Calu3 (cell line): ENCODE measurements at regions of chr15 and their contacts with region 1.

Region 1: DNA sequence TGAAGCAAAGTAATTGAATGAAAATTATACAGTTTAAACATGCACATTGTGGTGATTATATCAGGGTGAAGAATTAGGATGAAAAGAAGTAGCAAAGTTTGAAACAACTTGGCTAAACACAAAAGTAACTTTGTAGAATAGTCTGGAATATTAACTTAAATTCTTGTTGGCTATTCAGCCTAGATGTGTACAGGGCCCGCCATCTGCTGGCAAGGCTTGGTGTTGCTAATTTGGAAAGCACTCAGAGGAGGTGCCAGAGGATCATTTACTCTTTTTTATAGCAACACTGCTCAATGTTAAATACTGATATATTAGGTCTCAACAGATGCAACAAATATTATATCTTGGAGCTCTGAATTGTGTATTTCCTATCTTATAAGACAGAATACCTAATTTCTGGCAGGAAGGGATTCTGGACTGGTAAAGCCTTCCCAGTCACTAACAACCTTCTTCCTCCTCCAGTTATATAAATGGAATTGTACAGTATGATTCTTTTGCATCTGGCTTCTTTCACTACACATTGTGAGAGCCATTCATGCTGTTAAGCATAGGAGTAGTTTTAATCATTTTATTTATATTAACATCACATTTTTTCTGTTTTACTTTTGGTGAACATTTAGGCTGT is 36.1 kb downstream of the TTC23 start:
- DNase-seq: peak; percentile 79
- H3K4me3 Mint-ChIP-seq: no peak overlapping the region
- H3K27ac Mint-ChIP-seq: no peak overlapping the region
- H3K4me1 Mint-ChIP-seq: no peaks in the 10 kb centered on the region
- H3K27me3 Mint-ChIP-seq: no peaks in the 10 kb centered on the region
- CTCF ChIP-seq: peak; percentile 73

Region 2: DNA sequence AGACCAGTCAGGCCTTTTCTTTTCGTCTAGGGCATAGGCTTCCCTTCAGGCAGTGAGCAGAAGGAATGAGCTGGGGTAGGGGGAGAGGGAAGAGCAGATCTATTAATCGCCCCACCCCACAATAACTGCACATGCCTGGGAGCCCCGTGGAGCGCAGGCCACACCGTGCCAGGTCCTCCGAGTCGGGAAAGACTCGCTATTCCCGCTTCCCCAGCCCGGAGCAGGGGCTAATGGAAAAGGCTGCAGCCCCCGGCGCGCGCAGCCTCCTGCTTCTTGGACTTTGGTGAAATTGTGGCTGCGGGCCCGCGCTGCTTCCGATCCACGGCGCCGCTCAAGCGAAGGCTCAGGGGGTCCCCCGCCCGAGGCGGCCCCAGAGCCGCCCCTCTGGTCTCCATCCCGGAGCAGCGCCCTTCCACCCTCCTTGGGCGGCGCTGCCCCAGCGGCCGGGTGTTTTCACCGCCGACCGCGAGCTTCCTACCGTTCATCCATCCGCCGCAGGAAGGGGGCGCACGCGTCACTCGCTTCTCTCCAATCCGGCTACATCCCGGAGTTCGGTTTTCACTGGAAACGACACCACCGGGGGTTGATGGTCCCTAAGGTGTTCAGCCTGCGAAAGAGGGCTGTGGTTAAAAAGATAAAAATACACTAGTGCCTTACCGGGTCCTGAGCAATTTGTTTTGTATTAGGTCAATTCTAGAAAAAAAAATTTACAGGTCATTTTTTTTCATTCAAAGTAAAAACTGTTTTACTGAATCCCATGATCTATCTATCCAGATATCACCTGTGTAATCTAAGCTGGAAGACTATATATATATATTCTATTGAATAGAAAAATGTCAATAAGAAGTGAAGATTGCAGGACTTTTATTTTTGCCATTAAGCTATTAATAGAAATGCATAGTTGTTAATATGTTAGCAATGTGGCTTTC is 112.8 kb before region 1 on chr15:
- CTCF ChIA-PET with region 1: interaction called, 13 read pairs
- intact Hi-C with region 1: loop called (anchors 1 kb)
- DNase-seq: peak; percentile 93
- H3K4me3 Mint-ChIP-seq: peak overlapping the region; percentile 63
- H3K27ac Mint-ChIP-seq: no peak overlapping the region
- H3K4me1 Mint-ChIP-seq: peaks cover 8% of the 10 kb centered on the region
- H3K27me3 Mint-ChIP-seq: peaks cover 76% of the 10 kb centered on the region
- CTCF ChIP-seq: peak; percentile 89

Region 3: GRCh38 chr15:99123706-99124451 is 89.4 kb before region 1 on chr15:
- CTCF ChIA-PET with region 1: interaction called, 3 read pairs
- intact Hi-C with region 1: loop called (anchors 5 kb)
- DNase-seq: peak; percentile 83
- H3K4me3 Mint-ChIP-seq: peak overlapping the region; percentile 76
- H3K27ac Mint-ChIP-seq: peak overlapping the region; percentile 93
- H3K4me1 Mint-ChIP-seq: peaks cover 18% of the 10 kb centered on the region
- H3K27me3 Mint-ChIP-seq: no peaks in the 10 kb centered on the region
- CTCF ChIP-seq: no peak

Region 4: DNA sequence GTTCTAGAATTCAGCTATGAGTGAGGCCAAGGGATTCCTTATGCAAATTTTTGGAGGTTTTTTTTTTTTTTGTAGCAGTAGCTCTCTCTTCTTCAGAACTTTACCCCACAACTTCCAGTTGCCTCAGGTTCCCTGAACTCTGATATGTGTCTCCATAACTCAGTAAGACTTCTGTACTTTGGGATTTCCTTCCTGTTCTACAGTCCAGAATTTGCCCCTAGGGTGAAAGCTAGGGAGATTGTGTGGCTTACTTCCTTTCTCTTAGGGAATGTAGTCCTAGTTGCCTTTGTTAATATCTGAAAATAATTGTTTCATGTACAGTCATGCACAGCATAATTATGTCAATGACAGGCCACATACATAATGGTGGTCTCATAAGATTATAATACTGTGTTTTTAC is 68.8 kb after region 1 on chr15:
- CTCF ChIA-PET with region 1: no interaction called
- intact Hi-C with region 1: no loop called
- DNase-seq: no peak
- H3K4me3 Mint-ChIP-seq: no peak overlapping the region
- H3K27ac Mint-ChIP-seq: no peak overlapping the region
- H3K4me1 Mint-ChIP-seq: no peaks in the 10 kb centered on the region
- H3K27me3 Mint-ChIP-seq: no peaks in the 10 kb centered on the region
- CTCF ChIP-seq: no peak

Region 5: GRCh38 chr15:99454941-99455788 is 241.9 kb after region 1 on chr15:
- CTCF ChIA-PET with region 1: no interaction called
- intact Hi-C with region 1: no loop called
- DNase-seq: peak; percentile 86
- H3K4me3 Mint-ChIP-seq: peak overlapping the region; percentile 54
- H3K27ac Mint-ChIP-seq: peak overlapping the region; percentile 75
- H3K4me1 Mint-ChIP-seq: peaks cover 52% of the 10 kb centered on the region
- H3K27me3 Mint-ChIP-seq: no peaks in the 10 kb centered on the region
- CTCF ChIP-seq: no peak